ENCODE measurements at regions of chr12 and their contacts with region 1.

Region 1: DNA sequence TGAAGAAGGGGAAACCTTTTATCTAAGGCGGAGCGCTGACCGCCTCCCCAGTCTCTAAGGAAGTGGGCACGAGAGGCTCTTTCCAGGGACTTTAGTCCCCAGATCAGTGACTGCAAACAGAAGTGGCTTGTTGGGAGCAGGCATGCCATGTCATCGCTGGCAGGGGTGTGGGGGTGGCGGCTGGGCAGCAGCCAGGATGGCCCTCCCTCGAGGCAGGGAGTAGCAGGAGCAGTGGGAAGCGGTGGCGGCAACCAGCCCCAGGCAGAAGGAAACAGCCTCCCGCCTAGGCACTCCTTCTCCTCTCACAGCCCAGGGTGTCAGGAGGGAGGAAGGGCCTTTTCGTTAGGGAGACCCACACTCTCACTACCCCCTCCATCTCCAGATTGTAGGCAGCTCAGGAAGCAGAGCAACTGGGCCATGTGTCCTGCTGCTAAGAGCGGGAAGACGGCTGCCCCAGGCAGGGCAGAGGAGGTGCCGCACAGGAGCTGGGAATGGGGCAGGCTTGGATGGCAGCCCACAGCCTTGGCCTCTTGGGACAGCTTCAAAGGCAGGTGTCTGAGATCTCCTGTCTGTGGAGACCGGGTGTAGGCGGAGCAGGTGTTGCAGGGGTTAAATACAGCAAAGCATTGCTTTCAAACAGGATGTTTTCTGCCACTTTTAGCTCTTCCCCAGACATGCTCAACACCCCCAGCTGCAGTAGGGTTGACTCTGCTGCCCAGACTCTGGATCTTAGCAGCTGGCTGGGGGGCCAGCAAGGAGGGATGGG is 21.8 kb downstream of the VDR start:
- DNase-seq: peak; percentile 78
- ATAC-seq: peak; percentile 17
- H3K4me3 Mint-ChIP-seq: peak overlapping the region; percentile 76
- H3K27ac Mint-ChIP-seq: peak overlapping the region; percentile 96
- H3K4me1 Mint-ChIP-seq: peaks cover 74% of the 10 kb centered on the region
- H3K27me3 Mint-ChIP-seq: no peaks in the 10 kb centered on the region
- CTCF ChIP-seq: no peak

Region 2: DNA sequence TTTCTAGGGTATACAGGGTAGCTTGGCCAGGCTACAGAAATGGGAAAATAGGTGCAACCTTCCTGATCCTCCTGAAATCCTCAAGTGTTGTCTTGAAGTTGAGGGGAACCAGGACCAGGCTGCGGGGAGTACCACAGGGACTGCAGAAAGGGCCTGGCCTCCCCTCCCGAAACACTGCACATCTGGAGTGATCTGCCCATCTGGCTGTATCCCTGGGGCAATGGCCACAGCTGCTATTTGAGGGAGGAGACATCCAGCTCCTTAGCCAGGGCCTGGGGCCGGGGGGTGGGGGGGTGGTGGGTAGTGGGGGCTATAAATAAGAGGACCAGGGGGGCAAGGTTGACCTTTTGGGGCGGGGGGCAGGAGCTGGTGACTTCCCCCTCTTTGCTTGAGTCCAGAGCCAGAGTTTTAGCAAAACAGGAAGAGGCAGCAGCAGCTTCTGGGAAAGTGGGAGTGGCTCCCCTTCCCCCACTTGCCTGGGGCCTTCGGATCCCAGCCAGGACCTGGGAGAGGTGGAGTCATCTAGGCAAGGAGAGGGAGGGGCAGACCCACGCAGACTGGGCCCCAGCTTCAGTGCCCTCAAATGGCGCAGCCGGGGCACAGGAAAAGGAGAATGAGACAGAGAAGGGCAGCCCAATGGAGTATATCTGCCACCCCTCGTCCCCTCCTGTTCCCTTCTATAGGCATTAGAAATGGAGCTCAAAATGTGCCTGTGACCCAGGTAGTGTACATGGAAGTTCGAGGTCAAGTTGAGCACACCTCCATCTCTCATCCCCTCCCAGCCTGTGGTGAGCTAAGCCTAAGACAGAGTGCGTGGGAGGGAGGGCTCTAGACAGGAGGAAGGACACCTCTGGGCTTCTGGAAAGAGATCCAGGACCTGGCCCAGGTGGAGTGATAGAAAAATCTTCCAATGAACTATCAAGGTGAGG is 54.1 kb before region 1 on chr12:
- CTCF ChIA-PET with region 1: interaction called, 9 read pairs
- POLR2A ChIA-PET with region 1: interaction called, 13 read pairs
- intact Hi-C with region 1: no loop called
- DNase-seq: no peak
- ATAC-seq: no peak
- H3K4me3 Mint-ChIP-seq: peak overlapping the region; percentile 56
- H3K27ac Mint-ChIP-seq: peak overlapping the region; percentile 84
- H3K4me1 Mint-ChIP-seq: peaks cover 89% of the 10 kb centered on the region
- H3K27me3 Mint-ChIP-seq: no peaks in the 10 kb centered on the region
- CTCF ChIP-seq: no peak

Region 3: DNA sequence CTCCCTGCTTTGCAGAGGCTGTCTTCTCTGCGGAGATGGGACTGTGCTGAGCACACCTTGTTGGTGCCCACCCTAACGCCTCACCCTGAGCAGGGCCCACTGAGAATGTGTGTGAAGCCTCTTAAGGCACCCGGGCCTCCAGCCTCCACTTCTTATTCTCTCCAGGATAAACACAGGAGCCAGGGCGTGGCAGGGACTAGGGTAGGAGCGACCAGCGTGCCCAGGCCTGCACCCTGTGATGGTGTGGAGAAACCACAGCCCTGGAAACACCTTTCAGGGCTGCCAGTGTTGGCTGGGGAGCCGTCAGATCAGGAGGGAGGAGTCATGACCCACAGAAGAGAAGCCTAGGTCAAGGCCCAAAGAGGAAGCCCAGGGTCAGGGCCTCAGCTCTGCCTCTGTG is 19.5 kb before region 1 on chr12:
- CTCF ChIA-PET with region 1: interaction called, 27 read pairs
- POLR2A ChIA-PET with region 1: interaction called, 26 read pairs
- intact Hi-C with region 1: loop called (anchors 2 kb)
- DNase-seq: no peak
- ATAC-seq: no peak
- H3K4me3 Mint-ChIP-seq: no peak overlapping the region
- H3K27ac Mint-ChIP-seq: peak overlapping the region; percentile 25
- H3K4me1 Mint-ChIP-seq: peaks cover 72% of the 10 kb centered on the region
- H3K27me3 Mint-ChIP-seq: no peaks in the 10 kb centered on the region
- CTCF ChIP-seq: no peak

Region 4: GRCh38 chr12:47870175-47870781 is 12.7 kb before region 1 on chr12:
- CTCF ChIA-PET with region 1: interaction called, 27 read pairs
- POLR2A ChIA-PET with region 1: interaction called, 26 read pairs
- intact Hi-C with region 1: no loop called
- DNase-seq: no peak
- ATAC-seq: no peak
- H3K4me3 Mint-ChIP-seq: no peak overlapping the region
- H3K27ac Mint-ChIP-seq: peak overlapping the region; percentile 59
- H3K4me1 Mint-ChIP-seq: peaks cover 48% of the 10 kb centered on the region
- H3K27me3 Mint-ChIP-seq: no peaks in the 10 kb centered on the region
- CTCF ChIP-seq: peak; percentile 49

Region 5: DNA sequence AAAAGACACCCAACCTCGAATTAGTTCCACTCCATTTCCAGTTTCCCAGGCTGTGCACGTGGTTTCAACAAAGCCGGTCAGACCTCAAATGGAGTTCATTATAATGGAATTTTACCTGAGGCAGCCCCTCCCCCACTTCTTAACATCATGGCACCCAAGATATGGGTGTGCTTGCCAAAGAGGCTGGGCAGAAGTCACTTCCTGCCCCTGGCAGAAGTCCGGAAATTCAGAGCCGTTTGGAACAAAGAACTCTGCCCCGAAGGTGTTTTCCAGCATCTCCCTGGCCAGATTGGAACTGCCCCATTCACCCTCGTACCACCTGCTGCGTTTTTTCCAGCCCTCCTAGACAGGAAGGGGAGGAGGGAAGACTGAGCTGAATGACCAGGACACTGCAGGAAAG is 13.7 kb after region 1 on chr12:
- CTCF ChIA-PET with region 1: interaction called, 37 read pairs
- POLR2A ChIA-PET with region 1: interaction called, 6 read pairs
- intact Hi-C with region 1: no loop called
- DNase-seq: no peak
- ATAC-seq: no peak
- H3K4me3 Mint-ChIP-seq: no peak overlapping the region
- H3K27ac Mint-ChIP-seq: no peak overlapping the region
- H3K4me1 Mint-ChIP-seq: peaks cover 63% of the 10 kb centered on the region
- H3K27me3 Mint-ChIP-seq: peaks cover 4% of the 10 kb centered on the region
- CTCF ChIP-seq: no peak

Region 6: DNA sequence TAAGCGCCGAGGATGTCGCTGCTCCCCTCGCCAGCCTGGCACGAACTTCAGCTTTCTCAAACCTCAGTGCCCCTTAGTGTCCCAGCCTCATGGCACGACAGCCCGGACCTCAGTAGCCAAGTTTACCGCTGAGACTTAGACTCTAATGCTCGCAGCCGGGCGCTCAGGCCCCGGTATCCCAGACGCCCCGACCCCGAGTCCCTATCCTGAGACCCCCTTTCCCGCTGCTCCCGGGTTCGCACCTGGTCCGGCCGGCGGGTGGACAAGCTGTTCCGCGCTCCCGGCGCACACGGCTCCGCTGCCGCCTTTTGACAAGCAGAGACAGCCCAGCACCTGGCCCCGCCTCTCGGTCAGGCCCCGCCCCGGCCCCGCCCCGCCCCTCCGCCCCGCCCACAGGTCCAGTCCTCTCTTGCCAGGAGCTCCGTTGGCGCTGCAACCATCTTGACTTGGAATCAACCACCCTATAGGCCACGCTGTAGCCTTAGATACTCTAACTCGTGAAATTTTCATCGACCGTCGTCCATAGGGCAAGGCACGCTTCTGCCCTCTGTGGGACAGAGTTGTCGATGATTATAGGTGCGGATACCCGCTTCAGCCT is 21.8 kb after region 1 on chr12 and contains the start of gene VDR:
- CTCF ChIA-PET with region 1: interaction called, 37 read pairs
- POLR2A ChIA-PET with region 1: interaction called, 57 read pairs
- intact Hi-C with region 1: no loop called
- DNase-seq: peak; percentile 81
- ATAC-seq: peak; percentile 82
- H3K4me3 Mint-ChIP-seq: peak within 1 kb of the TSS; percentile 95
- H3K27ac Mint-ChIP-seq: peak within 1 kb of the TSS; percentile 94
- H3K4me1 Mint-ChIP-seq: peaks cover 45% of the 10 kb centered on the region
- H3K27me3 Mint-ChIP-seq: peaks cover 20% of the 10 kb centered on the region
- CTCF ChIP-seq: peak; percentile 31
- total RNA-seq, gene VDR: 84.6 to 86.4 TPM

Region 7: DNA sequence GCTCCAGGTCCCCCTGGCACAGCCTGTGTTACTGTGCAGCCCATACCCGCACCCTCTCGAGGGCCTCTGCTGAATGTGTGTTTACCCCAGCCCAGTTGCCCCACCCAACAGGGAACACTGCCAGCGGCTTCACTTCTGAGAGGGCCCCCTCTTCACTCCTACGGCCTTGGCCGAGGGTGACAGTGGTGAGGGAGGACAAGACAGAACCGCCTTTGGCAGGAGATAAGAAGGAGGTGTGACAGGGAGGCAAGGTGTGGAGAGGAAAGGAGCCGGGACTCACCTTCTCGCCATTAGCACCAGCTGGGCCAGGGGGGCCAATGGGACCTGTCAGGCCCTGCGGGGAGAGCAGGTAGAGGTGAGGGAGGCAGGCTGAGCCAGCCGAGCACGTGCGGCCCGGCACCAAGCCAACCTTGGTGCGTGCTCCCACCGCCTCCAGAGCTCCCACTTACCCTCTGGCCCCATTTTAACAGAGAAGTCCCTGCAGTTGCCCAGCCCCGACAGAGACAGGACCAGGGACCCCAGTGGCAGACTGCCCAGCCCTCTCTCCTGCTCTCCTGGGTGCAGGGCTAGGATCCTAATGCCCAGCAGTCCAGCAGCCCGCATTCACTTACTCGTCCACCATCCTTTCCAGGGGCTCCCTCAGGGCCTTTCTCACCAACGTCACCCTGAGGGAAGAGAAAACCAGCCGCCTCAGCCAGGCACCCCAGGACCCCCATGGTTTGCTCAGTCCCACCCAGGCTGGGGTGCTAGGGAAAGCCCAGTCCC is 98.7 kb after region 1 on chr12:
- CTCF ChIA-PET with region 1: no interaction called
- POLR2A ChIA-PET with region 1: no interaction called
- intact Hi-C with region 1: no loop called
- DNase-seq: no peak
- ATAC-seq: no peak
- H3K4me3 Mint-ChIP-seq: no peak overlapping the region
- H3K27ac Mint-ChIP-seq: no peak overlapping the region
- H3K4me1 Mint-ChIP-seq: no peaks in the 10 kb centered on the region
- H3K27me3 Mint-ChIP-seq: peaks cover 2% of the 10 kb centered on the region
- CTCF ChIP-seq: no peak

Region 8: DNA sequence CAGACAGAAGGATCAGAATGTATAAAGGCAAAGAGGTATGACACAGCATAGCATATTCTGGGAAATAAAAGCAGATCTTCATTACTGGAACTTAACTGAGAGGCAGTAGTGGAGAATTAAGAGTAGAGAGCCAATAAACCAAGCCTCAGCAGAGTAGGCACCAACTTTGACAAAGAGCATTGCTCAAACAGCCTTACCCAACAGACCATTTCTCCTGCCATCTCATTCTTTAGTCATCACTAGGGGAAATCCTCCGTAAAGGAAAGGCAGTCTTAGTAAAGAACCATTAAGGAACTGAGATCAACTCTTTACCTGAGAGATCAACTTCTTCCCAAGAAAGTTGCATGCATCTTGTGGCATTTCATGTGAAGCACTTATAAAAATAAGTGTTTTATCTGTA is 186.3 kb after region 1 on chr12:
- CTCF ChIA-PET with region 1: no interaction called
- POLR2A ChIA-PET with region 1: no interaction called
- intact Hi-C with region 1: no loop called
- DNase-seq: no peak
- ATAC-seq: no peak
- H3K4me3 Mint-ChIP-seq: no peak overlapping the region
- H3K27ac Mint-ChIP-seq: no peak overlapping the region
- H3K4me1 Mint-ChIP-seq: no peaks in the 10 kb centered on the region
- H3K27me3 Mint-ChIP-seq: no peaks in the 10 kb centered on the region
- CTCF ChIP-seq: no peak

Measured in activated CD8-positive, alpha-beta T cell treated with anti-CD3 and anti-CD28 coated beads for 36 hours (primary cell).